ENCODE measurements at regions of chr12 and their contacts with region 1.

Region 1: DNA sequence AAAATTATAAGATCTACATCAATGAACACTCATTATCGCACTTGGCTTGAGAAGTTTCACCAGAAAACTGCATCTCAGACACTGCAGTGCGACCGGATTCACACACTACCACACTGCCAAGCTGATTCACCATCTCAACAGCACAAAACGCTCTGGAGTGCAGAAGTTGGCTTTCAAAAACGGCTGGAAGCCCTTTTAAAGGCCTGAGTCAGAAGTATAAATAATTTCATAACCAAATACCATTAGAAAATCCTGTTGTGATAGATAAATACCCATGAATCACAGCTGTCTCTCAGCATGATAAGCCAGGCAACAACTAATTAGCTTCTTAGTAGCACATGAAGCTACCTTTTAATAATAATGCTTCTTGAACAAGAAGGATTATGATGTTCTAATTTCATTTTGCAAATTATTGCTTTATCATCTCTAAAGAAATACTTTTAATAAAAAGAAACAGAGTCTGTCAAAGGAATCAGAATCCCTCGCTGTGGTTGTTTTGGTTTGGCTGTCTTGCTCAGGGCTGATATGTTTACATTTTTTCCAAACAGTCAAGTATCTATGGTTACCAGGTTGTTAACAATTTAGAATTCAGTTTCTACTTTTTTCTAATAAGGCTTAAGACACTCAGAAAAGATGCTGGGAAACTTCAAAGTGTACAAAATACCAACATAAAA is 51.2 kb downstream of the SLC2A13 start:
- DNase-seq: no peak

Region 2: GRCh38 chr12:40093512-40093911 is 38.8 kb after region 1 on chr12:
- intact Hi-C with region 1: loop called in 1 of 2 experiments (anchors 5 kb)
- DNase-seq: no peak

Region 3: GRCh38 chr12:41122894-41123293 is 1068.2 kb after region 1 on chr12:
- intact Hi-C with region 1: no loop called
- DNase-seq: peak; percentile 53